Endothelial cell of umbilical vein (primary cell): ENCODE measurements at regions of chr11 and their contacts with region 1.

Region 1: GRCh38 chr11:10139656-10140055 is 154.4 kb downstream of the SBF2 start:
- DNase-seq: peak; percentile 88
- H3K4me3 ChIP-seq: no peak overlapping the region
- H3K27ac ChIP-seq: peak overlapping the region; percentile 10
- H3K4me1 ChIP-seq: peaks cover 15% of the 10 kb centered on the region
- H3K27me3 ChIP-seq: no peaks in the 10 kb centered on the region
- CTCF ChIP-seq: no peak
- POLR2A ChIP-seq: no peak

Region 2: GRCh38 chr11:10122326-10123197 is 17.1 kb before region 1 on chr11:
- CTCF ChIA-PET with region 1: no interaction called
- POLR2A ChIA-PET with region 1: no interaction called
- dilution Hi-C with region 1: no loop called
- intact Hi-C with region 1: no loop called
- DNase-seq: no peak
- H3K4me3 ChIP-seq: no peak overlapping the region
- H3K27ac ChIP-seq: no peak overlapping the region
- H3K4me1 ChIP-seq: peaks cover 18% of the 10 kb centered on the region
- H3K27me3 ChIP-seq: no peaks in the 10 kb centered on the region
- CTCF ChIP-seq: no peak
- POLR2A ChIP-seq: no peak

Region 3: GRCh38 chr11:10181811-10182210 is 42.2 kb after region 1 on chr11:
- CTCF ChIA-PET with region 1: interaction called, 12 read pairs
- POLR2A ChIA-PET with region 1: no interaction called
- dilution Hi-C with region 1: no loop called
- intact Hi-C with region 1: no loop called
- DNase-seq: peak; percentile 48
- H3K4me3 ChIP-seq: no peak overlapping the region
- H3K27ac ChIP-seq: no peak overlapping the region
- H3K4me1 ChIP-seq: no peaks in the 10 kb centered on the region
- H3K27me3 ChIP-seq: no peaks in the 10 kb centered on the region
- CTCF ChIP-seq: peak; percentile 14 to 16
- POLR2A ChIP-seq: no peak